ENCODE measurements at regions of chr1 and their contacts with region 1.

Region 1: GRCh38 chr1:78607334-78607927 is 12.8 kb upstream of the IFI44L start:
- DNase-seq: no peak
- H3K4me3 Mint-ChIP-seq: no peak overlapping the region
- H3K27ac Mint-ChIP-seq: no peak overlapping the region
- H3K4me1 Mint-ChIP-seq: peaks cover 4% of the 10 kb centered on the region
- H3K27me3 Mint-ChIP-seq: peaks cover 30% of the 10 kb centered on the region

Region 2: DNA sequence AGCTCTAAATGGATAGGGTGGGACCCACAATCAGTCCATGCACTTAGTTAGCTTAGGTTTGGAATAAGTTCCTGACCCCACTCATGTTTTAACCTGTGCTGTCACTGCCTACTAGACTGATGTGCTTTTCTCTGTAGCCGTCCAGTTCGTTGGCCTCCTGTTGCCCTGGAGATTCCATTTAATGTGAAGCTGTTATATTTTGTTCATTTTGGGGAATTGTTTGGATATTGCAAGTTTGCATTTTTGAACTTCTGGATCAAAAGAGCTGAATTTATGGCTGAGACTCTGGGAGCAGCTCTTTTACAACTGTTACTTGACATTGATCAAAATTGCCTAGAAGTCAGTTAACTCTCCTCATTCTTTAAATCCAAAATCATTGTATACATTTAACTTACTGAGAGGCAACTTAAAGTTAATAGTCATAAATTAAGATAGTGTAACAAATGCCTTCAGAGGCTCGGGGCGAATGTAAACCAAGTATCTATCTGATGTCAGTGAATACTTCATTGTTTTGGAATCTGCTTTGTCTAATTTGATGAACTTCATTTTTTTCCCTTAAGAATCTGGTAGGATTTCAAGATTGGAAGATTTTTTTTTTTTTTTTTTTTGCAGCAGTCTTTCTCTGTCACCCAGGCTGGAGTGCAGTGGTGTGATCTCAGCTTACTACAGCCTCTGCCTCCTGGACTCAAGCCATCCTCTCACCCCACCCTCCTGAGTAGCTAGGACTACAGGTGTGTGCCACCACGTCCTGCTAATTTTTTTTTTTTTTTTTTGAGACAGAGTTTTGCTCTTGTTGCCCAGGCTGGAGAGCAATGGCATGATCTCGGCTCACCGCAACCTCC is 789.8 kb before region 1 on chr1:
- intact Hi-C with region 1: no loop called
- DNase-seq: no peak
- H3K4me3 Mint-ChIP-seq: no peak overlapping the region
- H3K27ac Mint-ChIP-seq: no peak overlapping the region
- H3K4me1 Mint-ChIP-seq: no peaks in the 10 kb centered on the region
- H3K27me3 Mint-ChIP-seq: no peaks in the 10 kb centered on the region

Region 3: GRCh38 chr1:78126506-78126905 is 480.9 kb before region 1 on chr1:
- intact Hi-C with region 1: loop called (anchors 1 kb)
- DNase-seq: no peak
- H3K4me3 Mint-ChIP-seq: no peak overlapping the region
- H3K27ac Mint-ChIP-seq: no peak overlapping the region
- H3K4me1 Mint-ChIP-seq: no peaks in the 10 kb centered on the region
- H3K27me3 Mint-ChIP-seq: peaks cover 2% of the 10 kb centered on the region

Region 4: GRCh38 chr1:78145105-78145580 is 462.3 kb before region 1 on chr1:
- intact Hi-C with region 1: loop called (anchors 5 kb)
- DNase-seq: peak; percentile 78
- H3K4me3 Mint-ChIP-seq: no peak overlapping the region
- H3K27ac Mint-ChIP-seq: no peak overlapping the region
- H3K4me1 Mint-ChIP-seq: peaks cover 17% of the 10 kb centered on the region
- H3K27me3 Mint-ChIP-seq: peaks cover 16% of the 10 kb centered on the region